GM12878 (cell line): ENCODE measurements at regions of chr11 and their contacts with region 1.

Region 1: GRCh38 chr11:15289723-15290122 is 175.0 kb downstream of the INSC start:
- DNase-seq: no peak
- ATAC-seq: no peak
- H3K4me3 ChIP-seq: no peak overlapping the region
- H3K27ac ChIP-seq: no peak overlapping the region
- H3K4me1 ChIP-seq: no peaks in the 10 kb centered on the region
- H3K27me3 ChIP-seq: no peaks in the 10 kb centered on the region
- CTCF ChIP-seq: no peak
- EP300 ChIP-seq: no peak
- POLR2A ChIP-seq: no peak
- RAD21 ChIP-seq: no peak

Region 2: DNA sequence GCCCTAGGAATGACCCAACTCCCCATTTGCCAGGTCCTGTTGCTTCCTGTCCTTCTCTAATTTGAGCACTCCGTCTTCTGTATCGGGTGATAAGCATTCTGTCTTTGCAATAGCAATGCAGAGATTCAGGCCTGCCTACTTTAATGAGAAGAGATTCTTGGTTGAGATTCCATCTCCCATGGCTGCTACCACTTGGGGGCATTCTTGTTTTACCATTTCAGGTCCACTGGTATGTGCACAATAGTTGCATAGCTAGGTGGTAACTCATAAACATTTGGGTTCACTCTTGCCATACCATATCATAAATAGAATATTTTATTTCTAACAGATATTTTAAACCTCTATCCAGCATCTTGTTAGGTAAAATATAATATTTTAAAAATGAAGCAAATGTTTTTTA is 250.8 kb before region 1 on chr11:
- CTCF ChIA-PET with region 1: no interaction called
- POLR2A ChIA-PET with region 1: no interaction called
- RAD21 ChIA-PET with region 1: no interaction called
- SMC1A ChIA-PET with region 1: no interaction called
- in situ Hi-C with region 1: no loop called
- intact Hi-C with region 1: no loop called
- DNase-seq: no peak
- ATAC-seq: no peak
- H3K4me3 ChIP-seq: no peak overlapping the region
- H3K27ac ChIP-seq: no peak overlapping the region
- H3K4me1 ChIP-seq: no peaks in the 10 kb centered on the region
- H3K27me3 ChIP-seq: no peaks in the 10 kb centered on the region
- CTCF ChIP-seq: no peak; a peak in 1 of 6 replicates
- EP300 ChIP-seq: no peak
- POLR2A ChIP-seq: no peak
- RAD21 ChIP-seq: no peak

Region 3: DNA sequence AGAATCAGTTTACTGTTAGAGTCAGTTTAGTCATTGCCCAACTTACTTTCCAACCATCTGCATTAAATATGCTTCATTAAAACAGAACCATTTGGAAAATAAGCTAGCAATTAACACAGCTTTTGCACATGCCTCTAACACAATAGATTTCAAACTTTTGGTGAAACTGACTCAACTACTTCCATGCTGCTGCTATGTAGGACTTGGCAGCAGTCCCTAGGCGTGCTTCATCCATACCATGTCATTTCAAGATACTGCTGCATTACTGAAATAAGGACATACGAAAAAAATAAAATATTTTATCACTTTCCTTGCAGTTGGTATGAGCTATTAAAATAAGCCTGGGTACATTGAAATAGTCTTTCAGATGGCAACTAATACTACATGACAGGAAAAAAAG is 1132.1 kb after region 1 on chr11:
- CTCF ChIA-PET with region 1: no interaction called
- POLR2A ChIA-PET with region 1: interaction called, 10 read pairs
- RAD21 ChIA-PET with region 1: no interaction called
- SMC1A ChIA-PET with region 1: no interaction called
- in situ Hi-C with region 1: no loop called
- intact Hi-C with region 1: no loop called
- DNase-seq: no peak
- ATAC-seq: no peak
- H3K4me3 ChIP-seq: no peak overlapping the region
- H3K27ac ChIP-seq: no peak overlapping the region
- H3K4me1 ChIP-seq: no peaks in the 10 kb centered on the region
- H3K27me3 ChIP-seq: no peaks in the 10 kb centered on the region
- CTCF ChIP-seq: no peak
- EP300 ChIP-seq: no peak
- POLR2A ChIP-seq: no peak
- RAD21 ChIP-seq: no peak